ENCODE measurements at regions of chr19 and their contacts with region 1.

Region 1: GRCh38 chr19:34096020-34096915 is 76.0 kb upstream of the LSM14A start:
- DNase-seq: peak; percentile 68
- H3K4me3 ChIP-seq: no peak overlapping the region
- H3K27ac ChIP-seq: no peak overlapping the region
- H3K4me1 ChIP-seq: no peaks in the 10 kb centered on the region
- CTCF ChIP-seq: peak; percentile 91

Region 2: DNA sequence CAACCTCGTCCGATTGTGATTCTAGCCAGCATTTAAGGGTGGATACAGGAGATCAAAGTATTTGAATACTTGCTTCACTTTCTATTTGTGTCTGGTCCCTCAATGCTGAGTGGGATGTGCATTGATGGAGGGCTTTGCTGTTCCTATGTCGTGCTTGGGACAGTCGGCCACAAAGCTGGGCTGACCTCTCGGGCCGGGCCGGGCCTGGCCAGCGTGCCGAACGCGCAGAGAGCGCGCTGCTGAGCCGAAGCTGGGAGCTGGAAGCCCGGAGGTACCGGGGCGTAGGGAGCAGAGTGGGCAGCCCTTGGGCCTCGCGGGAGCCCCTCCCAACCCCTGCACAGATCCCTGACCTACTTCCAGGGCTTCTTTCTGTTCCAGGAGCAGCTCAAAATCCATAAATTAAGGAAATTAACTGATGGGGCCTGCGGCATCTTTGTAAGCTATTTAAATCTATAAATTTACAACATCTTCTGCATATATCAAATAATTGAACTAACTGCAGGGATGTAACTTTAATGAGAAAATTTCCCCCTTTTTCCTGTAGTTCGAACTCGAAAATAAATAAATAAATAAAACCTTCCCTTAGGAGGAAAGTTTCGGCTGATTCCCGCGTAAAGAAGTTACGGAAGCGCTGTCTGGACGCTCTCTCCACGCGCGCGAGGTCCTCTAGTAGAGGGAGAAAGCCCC is 301.4 kb before region 1 on chr19:
- CTCF ChIA-PET with region 1: no interaction called
- POLR2A ChIA-PET with region 1: no interaction called
- intact Hi-C with region 1: loop called (anchors 5 kb)
- DNase-seq: no peak
- H3K4me3 ChIP-seq: peak overlapping the region; percentile 87
- H3K27ac ChIP-seq: peak overlapping the region; percentile 91
- H3K4me1 ChIP-seq: peaks cover 12% of the 10 kb centered on the region
- CTCF ChIP-seq: no peak; the same call in 1 of the 2 replicates

Region 3: GRCh38 chr19:34134190-34135053 is 38.2 kb after region 1 on chr19:
- CTCF ChIA-PET with region 1: no interaction called
- POLR2A ChIA-PET with region 1: no interaction called
- intact Hi-C with region 1: no loop called
- DNase-seq: peak; percentile 93
- H3K4me3 ChIP-seq: peak overlapping the region; percentile 86
- H3K27ac ChIP-seq: peak overlapping the region; percentile 45
- H3K4me1 ChIP-seq: no peaks in the 10 kb centered on the region
- CTCF ChIP-seq: no peak